Right ventricle myocardium inferior (tissue), 1 donor: ENCODE measurements at regions of chr7 and their contacts with region 1.

Region 1: GRCh38 chr7:25095516-25096345 is 29.3 kb downstream of the CYCS start:
- DNase-seq: no peak
- ATAC-seq: no peak

Region 2: GRCh38 chr7:24819916-24820689 is 275.6 kb before region 1 on chr7:
- intact Hi-C with region 1: loop called (anchors 2 kb)
- DNase-seq: peak; percentile 81
- ATAC-seq: peak; percentile 90

Region 3: DNA sequence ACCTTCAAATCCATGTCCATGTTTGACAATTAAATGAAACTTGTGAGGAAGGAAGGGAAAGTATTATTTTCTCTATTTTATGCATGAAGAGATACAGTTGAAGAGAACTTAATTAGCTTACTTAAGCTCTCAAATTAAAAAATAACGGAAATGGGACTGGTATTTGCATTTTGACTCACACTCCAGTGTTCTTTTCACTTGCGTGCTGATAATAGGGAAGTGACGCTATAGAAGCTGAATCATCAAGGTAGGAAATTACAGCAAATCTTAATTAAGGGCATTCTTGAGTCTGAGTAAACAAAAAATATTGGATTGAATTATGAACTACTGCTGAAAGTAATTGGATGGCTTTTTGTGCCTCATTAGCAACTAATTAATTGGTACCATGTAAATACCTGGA is 176.5 kb after region 1 on chr7:
- intact Hi-C with region 1: no loop called
- DNase-seq: no peak
- ATAC-seq: no peak